ENCODE measurements at regions of chr13 and their contacts with region 1.

Region 1: DNA sequence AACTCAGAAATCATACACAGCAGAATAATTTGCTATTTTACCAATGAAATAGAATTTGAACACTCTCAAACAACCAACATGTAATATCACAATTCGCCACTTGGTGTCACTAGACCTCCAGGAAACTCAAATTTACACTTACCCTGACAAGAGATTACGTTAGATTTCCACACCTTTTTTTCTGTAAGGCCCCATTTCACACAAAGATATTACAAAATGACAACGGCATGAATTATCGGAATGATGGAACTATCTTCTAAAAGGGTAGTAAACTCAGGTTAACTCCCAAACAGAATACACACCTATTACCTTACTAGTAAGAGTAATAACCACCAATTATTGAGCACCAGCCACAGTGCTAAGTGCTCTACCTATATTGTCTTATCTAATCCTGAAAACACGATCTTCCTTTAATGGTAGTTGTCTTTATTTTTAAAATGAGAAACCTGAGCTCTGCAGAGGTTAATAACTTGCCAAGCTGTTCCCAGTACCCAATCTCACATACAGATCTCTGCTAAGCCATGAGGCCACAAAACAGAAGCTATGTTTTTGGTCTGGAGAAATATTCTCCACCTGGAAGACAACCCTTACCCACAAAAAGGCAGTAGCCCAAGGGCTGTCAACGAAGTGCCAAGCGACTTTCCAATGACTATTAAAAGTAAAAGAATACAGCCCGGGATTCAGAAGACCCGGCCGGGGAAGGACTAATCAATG is 152.4 kb downstream of the DCLK1 start:
- DNase-seq: peak; percentile 76
- H3K4me3 ChIP-seq: no peak overlapping the region
- CTCF ChIP-seq: peak; percentile 51

Region 2: GRCh38 chr13:35927567-35928021 is 51.2 kb before region 1 on chr13:
- in situ Hi-C with region 1: no loop called
- DNase-seq: peak; percentile 32
- H3K4me3 ChIP-seq: no peak overlapping the region
- CTCF ChIP-seq: no peak

Region 3: DNA sequence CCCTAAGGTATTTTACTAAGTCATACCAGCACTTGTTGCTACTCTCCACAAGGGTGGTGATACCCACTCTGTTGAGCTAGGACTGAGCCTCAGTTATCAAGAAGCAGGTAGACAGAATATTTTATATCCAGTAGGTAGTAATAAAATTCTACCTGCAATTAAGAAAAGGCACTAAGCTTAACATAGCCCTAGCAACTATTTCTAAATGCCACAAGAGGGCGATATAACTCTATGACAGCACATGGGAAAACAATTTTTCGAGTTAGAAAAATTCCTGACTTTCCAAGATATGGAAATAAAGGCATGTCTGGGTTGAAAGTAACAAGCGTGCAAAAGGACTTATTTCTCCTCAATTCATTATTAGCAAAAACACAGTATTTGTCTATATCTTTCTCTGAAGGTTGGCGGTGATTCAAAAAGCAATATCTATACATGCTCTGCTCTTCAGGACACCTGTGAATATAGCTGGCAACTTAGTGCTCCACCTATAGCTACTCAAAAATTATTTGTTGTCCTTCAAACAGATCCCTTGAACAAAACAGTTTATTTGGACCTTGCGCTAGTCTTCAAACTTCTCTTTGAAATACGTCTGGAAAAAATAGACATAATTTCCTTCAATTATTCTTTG is 304.2 kb after region 1 on chr13:
- in situ Hi-C with region 1: loop called (anchors 5 kb)
- DNase-seq: peak; percentile 38
- H3K4me3 ChIP-seq: no peak overlapping the region
- CTCF ChIP-seq: peak; percentile 63

Region 4: DNA sequence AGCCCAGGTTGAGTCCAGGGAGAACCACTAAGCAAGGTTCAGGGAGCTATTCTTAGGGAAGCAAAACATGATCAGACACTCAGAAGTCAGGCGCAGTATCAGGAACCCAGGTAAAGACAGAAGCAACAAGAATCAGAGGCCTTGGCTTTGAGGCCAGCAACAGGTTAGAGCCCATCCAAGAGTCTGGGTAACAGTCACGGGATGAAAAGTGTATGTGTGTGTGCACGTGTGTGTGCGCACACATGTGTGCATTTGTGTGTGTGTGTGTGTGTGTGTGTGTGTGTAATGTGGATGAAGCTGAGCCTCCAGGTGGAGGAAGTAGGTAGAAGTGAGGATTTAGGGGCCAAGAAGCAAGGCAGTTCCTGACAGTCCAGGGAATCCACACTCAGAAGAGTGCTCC is 516.7 kb after region 1 on chr13:
- in situ Hi-C with region 1: no loop called
- DNase-seq: no peak
- H3K4me3 ChIP-seq: no peak overlapping the region
- CTCF ChIP-seq: no peak

Measured in astrocyte of the cerebellum (primary cell).